ENCODE measurements at regions of chr10 and their contacts with region 1.

Region 1: DNA sequence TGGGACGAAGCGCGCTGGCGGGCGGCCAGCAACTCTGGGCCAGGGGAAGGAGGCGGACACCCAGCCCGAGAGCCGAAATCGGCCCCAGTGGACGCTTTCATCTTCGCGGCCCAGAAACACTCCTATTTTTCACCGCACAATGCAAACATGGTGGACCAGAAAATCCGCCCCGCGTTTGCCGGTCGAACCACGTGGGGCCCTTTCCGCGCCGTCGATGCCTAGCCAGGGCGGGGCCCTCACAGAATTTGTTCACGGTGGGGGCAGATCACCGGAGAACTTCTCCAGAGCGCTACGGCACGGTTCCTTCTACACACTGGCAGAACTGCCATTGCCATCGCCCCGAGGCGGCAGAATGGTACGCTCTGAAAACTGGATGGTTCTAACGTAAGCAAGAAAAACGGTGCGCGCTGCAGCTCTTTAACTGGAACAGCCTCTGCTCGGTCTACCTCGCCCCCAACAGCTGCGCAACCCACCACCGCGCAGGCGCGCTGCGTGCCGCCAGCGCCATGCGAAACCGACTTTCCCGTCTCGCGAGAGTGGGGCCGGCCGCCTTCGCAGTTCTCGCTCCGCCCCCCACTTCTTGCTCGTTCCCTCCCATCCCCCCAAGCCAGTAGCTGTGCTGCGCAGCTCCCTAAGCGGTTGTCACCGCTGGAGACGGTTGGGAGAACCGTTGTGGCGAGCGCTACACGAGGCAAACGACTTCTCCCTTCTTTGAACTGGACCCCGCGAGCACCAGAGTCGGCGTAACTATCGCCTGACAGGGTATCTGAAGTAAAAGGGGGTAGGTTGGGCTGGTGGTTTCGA is at the start of gene HNRNPH3:
- DNase-seq: peak; percentile 98 to 99 (median 99)
- H3K4me3 ChIP-seq: peak within 1 kb of the TSS; percentile 95
- H3K4me3 Mint-ChIP-seq: peak within 1 kb of the TSS; percentile 96 to 100 (median 100)
- H3K27ac ChIP-seq: peak within 1 kb of the TSS; percentile 96
- H3K27ac Mint-ChIP-seq: peak within 1 kb of the TSS; percentile 98 to 100 (median 100)
- H3K4me1 ChIP-seq: peaks cover 23% of the 10 kb centered on the region
- H3K4me1 Mint-ChIP-seq: peaks cover 38 to 58% (median 46%) of the 10 kb centered on the region in 3 donors
- H3K27me3 ChIP-seq: no peaks in the 10 kb centered on the region
- H3K27me3 Mint-ChIP-seq: peaks cover 0 to 6% of the 10 kb centered on the region in 2 donors
- total RNA-seq, gene HNRNPH3: 170 to 171 TPM

Region 2: DNA sequence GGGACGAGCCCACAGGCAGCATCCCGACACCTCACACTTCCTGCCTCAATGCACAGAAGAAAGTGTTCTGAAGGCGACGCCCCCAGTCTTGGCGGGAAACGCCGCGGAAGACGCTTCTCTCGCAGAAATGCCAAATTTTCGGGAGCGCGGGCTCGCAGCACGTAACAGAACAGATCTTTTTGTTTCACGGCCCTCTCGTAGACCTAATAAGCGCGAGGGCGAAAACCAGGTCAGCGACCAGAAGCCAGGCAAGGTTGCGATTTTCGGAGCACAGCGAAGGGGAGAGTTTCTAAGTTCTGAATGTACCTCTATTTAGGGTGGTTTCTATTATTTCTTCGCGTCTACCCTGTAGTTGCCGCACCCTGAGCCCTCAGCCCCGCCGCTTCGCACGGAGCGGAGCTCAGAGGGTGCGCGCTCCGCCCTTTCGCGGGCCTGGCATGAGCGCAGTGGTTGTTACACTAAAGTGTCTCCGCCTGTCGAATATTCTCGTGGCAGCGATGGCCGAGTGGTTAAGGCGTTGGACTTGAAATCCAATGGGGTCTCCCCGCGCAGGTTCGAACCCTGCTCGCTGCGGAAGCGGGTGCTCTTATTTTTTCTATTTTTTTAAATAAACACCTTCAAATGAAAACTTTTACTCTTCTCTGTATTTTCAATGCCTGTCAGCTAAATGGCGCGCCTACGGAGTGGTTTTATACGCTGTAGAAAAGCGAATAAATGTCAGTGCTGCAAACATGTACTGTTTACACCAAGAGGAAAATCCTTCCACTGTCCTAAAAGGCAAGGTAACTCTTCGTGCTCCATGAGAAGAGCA is 567.4 kb before region 1 on chr10:
- CTCF ChIA-PET with region 1: no interaction called
- POLR2A ChIA-PET with region 1: interaction called, 11 read pairs
- DNase-seq: peak; percentile 90 to 98 (median 96)
- H3K4me3 ChIP-seq: peak overlapping the region; percentile 98
- H3K4me3 Mint-ChIP-seq: peak overlapping the region; percentile 87 to 97 (median 92)
- H3K27ac ChIP-seq: peak overlapping the region; percentile 86
- H3K27ac Mint-ChIP-seq: peak overlapping the region; percentile 94 to 99 (median 98)
- H3K4me1 ChIP-seq: peaks cover 10% of the 10 kb centered on the region
- H3K4me1 Mint-ChIP-seq: peaks cover 12 to 14% (median 14%) of the 10 kb centered on the region in 3 donors
- H3K27me3 ChIP-seq: no peaks in the 10 kb centered on the region
- H3K27me3 Mint-ChIP-seq: peaks cover 4 to 14% of the 10 kb centered on the region in 2 donors

Region 3: DNA sequence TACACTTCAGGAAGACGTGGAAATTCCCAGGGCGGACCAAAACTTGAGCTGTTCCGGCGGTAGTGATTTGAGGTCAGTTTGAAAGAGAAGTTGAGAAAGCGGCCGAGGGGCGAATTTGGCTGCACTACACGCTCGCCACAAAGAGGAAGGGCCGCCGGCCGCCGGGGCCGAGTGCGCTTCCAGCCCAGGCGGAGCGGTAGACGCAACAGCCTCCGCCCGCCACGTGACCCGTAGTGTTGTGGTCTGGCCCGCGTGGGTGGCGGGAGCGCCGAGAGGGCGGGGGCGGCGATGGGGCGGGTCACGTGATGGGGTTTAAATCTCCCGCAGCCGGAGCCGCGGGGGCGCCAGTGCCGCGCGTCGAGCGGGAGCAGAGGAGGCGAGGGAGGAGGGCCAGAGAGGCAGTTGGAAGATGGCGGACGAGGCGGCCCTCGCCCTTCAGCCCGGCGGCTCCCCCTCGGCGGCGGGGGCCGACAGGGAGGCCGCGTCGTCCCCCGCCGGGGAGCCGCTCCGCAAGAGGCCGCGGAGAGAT is 447.3 kb before region 1 on chr10 and contains the start of gene SIRT1:
- CTCF ChIA-PET with region 1: no interaction called
- POLR2A ChIA-PET with region 1: interaction called, 23 read pairs
- DNase-seq: peak; percentile 88 to 94 (median 92)
- H3K4me3 ChIP-seq: peak within 1 kb of the TSS; percentile 60
- H3K4me3 Mint-ChIP-seq: peak within 1 kb of the TSS; percentile 84 to 98 (median 92)
- H3K27ac ChIP-seq: peak within 1 kb of the TSS; percentile 84
- H3K27ac Mint-ChIP-seq: peak within 1 kb of the TSS; percentile 92 to 98 (median 96)
- H3K4me1 ChIP-seq: peaks cover 32% of the 10 kb centered on the region
- H3K4me1 Mint-ChIP-seq: peaks cover 37 to 45% (median 40%) of the 10 kb centered on the region in 3 donors
- H3K27me3 ChIP-seq: no peaks in the 10 kb centered on the region
- H3K27me3 Mint-ChIP-seq: no peaks in the 10 kb centered on the region
- total RNA-seq, gene SIRT1: 24.8 to 26.5 TPM

Region 4: GRCh38 chr10:68348265-68348741 is 16.6 kb after region 1 on chr10:
- CTCF ChIA-PET with region 1: interaction called, 18 read pairs
- POLR2A ChIA-PET with region 1: interaction called, 7 read pairs
- DNase-seq: peak; percentile 7 to 58 (median 24)
- H3K4me3 ChIP-seq: no peak overlapping the region
- H3K4me3 Mint-ChIP-seq: no peak overlapping the region
- H3K27ac ChIP-seq: no peak overlapping the region
- H3K27ac Mint-ChIP-seq: peak overlapping the region in 7 of 8 donors; percentile 48 to 88 (median 84)
- H3K4me1 ChIP-seq: no peaks in the 10 kb centered on the region
- H3K4me1 Mint-ChIP-seq: peaks cover 4 to 7% (median 5%) of the 10 kb centered on the region in 3 donors
- H3K27me3 ChIP-seq: no peaks in the 10 kb centered on the region
- H3K27me3 Mint-ChIP-seq: no peaks in the 10 kb centered on the region

Region 5: DNA sequence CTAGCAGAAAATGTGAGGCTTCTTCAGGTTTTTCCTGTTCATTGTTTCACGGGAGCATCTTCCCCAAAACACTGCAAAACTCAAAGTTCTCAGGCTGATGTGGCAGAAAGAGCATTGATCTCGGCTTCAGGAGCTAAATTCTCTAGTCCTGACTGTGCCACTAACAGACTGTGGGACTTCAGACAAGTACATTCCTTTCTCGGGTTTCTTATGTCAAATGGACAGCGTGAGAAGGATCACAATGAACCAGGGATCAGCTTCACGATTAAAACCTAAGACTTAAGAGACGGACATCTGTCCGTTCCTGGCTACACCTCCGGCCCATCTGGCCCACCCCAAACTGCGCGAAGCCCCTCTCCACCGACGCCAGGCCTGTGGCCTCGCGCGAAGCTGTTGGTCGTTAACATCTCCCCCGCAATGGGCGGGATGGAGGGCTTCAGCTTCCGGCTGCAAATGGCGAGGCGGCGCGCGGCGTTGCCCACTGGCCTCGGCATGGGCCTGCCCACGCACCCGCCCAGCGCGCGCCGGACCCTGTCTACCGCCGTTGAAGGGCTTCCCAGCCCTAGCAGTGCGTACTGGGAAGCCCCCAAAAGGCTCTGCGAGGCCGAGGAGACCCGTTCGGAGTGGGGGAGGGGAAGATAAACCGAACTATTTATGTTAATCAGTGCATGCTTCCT is 568.9 kb after region 1 on chr10:
- CTCF ChIA-PET with region 1: no interaction called
- POLR2A ChIA-PET with region 1: interaction called, 11 read pairs
- DNase-seq: no peak
- H3K4me3 ChIP-seq: peak overlapping the region; percentile 85
- H3K4me3 Mint-ChIP-seq: peak overlapping the region; percentile 96 to 99 (median 98)
- H3K27ac ChIP-seq: peak overlapping the region; percentile 98
- H3K27ac Mint-ChIP-seq: peak overlapping the region; percentile 98 to 100 (median 99)
- H3K4me1 ChIP-seq: peaks cover 30% of the 10 kb centered on the region
- H3K4me1 Mint-ChIP-seq: peaks cover 34 to 47% (median 44%) of the 10 kb centered on the region in 3 donors
- H3K27me3 ChIP-seq: no peaks in the 10 kb centered on the region
- H3K27me3 Mint-ChIP-seq: peaks cover 0 to 3% of the 10 kb centered on the region in 2 donors

Measured in CD8-positive, alpha-beta memory T cell (primary cell).